ENCODE measurements at regions of chr5 and their contacts with region 1.

Region 1: DNA sequence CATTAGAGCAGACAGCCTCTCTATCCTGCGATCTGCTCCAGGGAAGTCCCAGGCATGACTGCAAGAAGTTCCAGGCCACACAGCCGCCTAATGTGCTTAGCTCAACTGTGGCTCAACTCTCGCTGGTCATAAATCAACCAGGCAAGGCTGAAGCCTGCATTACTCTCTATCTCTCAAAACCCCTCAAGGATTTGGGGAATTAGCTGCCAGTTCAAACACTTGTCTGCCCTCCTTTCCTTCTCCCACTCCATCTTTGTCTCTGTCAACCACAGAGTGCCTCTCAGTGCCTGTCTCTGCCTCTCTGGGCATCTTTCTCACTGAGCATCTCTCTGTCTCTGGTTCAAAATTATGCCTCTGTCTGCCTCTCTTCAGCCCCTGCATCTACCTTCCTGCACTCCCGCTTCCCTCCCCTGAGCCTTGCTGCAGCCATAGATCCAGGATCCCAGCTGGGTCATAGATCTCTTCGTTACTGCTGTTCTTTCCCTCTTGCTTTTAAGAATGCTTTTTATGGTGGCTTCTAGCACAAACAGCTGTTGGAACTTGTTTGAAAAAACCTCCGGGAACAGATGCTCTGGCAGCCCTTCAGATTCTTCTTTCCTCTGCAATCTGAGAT is 27.9 kb upstream of the GALNT10 start:
- ATAC-seq: peak in 5 of 8 experiments; percentile 43 to 74 (median 58)
- H3K4me3 ChIP-seq: no peak overlapping the region
- H3K27ac ChIP-seq: no peak overlapping the region
- H3K4me1 ChIP-seq: peaks cover 6 to 14% of the 10 kb centered on the region in 2 donors

Region 2: DNA sequence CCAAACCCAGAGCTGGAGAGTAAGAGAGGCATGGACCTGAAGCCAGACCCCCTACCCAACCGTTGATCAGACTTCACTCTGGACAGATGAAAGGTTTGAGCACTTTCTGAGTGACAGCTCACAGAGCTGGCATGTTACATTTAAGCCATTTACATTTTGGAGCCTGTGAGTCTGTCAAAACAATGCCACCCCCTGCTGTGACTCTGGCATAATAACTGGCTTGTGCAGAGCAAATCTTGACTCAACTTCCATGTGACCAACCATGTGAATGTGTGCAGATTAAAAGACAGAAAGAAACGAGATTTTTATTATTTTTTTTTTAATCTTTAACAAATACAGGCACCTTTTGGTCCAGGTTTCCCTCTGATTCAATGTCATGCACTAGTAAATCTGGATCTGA is 75.4 kb before region 1 on chr5:
- in situ Hi-C with region 1: loop called in 2 of 9 experiments (anchors 10 kb)
- ATAC-seq: peak in 3 of 8 experiments; percentile 17 to 77 (median 32)
- H3K4me3 ChIP-seq: no peak overlapping the region
- H3K27ac ChIP-seq: no peak overlapping the region
- H3K4me1 ChIP-seq: peaks cover 24 to 33% of the 10 kb centered on the region in 2 donors

Measured in motor neuron (in vitro differentiated cells).